Activated CD4-positive, alpha-beta T cell treated with anti-CD3 and anti-CD28 coated beads for 36 hours (primary cell): ENCODE measurements at regions of chr14 and their contacts with region 1.

Region 1: DNA sequence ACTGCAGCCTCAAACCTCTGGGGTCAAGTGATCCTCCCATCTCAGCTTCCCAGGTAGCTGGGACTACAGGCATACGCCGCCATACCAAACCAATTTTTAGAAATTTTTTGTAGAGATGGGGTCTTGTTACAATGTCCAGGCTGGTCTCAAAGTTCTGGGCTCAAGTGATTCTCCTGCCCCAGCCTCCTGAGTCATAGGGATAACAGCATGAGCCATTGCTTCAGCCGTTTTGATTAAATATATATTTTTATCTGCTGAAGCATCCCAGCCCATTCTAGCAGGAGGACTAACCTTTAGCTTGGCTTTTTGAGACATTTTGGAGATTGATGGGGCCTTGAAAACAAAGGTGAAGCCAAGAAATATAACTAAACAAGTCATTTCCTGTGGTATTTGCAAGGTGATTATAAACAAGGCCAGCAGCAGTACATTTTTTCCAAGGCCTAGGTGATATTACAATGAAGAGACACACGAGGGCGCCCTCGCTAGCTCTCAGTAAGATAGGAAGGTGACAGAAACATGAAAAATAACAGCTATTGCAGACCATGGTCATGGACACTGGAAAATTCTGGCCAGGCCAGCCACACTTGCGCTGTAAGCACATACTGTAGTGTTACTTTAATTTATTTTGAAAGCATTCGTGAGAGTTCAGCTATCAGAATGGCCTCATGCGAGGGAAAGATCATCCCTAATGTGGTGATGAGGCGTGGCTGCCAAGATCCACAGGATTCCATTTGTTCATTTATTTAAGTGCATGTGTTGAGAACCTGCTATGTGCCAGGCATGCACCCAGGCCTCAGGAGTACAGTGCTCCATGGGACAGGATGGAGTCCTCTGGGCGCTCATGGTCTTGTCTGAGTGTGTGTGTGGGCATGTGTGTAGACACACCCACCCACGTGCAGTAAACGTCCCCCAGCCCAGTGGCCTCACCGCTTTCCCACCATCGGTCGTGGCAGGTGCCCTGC is 63.5 kb downstream of the DGLUCY start:
- DNase-seq: peak; percentile 79
- ATAC-seq: peak; percentile 81
- H3K4me3 Mint-ChIP-seq: no peak overlapping the region
- H3K27ac Mint-ChIP-seq: peak overlapping the region; percentile 92
- H3K4me1 Mint-ChIP-seq: peaks cover 11% of the 10 kb centered on the region
- H3K27me3 Mint-ChIP-seq: no peaks in the 10 kb centered on the region

Region 2: GRCh38 chr14:90697577-90698206 is 479.7 kb before region 1 on chr14:
- CTCF ChIA-PET with region 1: no interaction called
- POLR2A ChIA-PET with region 1: no interaction called
- intact Hi-C with region 1: no loop called
- DNase-seq: peak; percentile 87
- ATAC-seq: peak; percentile 95
- H3K4me3 Mint-ChIP-seq: no peak overlapping the region
- H3K27ac Mint-ChIP-seq: no peak overlapping the region
- H3K4me1 Mint-ChIP-seq: no peaks in the 10 kb centered on the region
- H3K27me3 Mint-ChIP-seq: no peaks in the 10 kb centered on the region

Region 3: GRCh38 chr14:90903101-90903500 is 274.3 kb before region 1 on chr14:
- CTCF ChIA-PET with region 1: interaction called, 198 read pairs
- POLR2A ChIA-PET with region 1: no interaction called
- intact Hi-C with region 1: loop called (anchors 1 kb)
- DNase-seq: peak; percentile 77
- ATAC-seq: peak; percentile 86
- H3K4me3 Mint-ChIP-seq: no peak overlapping the region
- H3K27ac Mint-ChIP-seq: no peak overlapping the region
- H3K4me1 Mint-ChIP-seq: peaks cover 22% of the 10 kb centered on the region
- H3K27me3 Mint-ChIP-seq: no peaks in the 10 kb centered on the region

Region 4: DNA sequence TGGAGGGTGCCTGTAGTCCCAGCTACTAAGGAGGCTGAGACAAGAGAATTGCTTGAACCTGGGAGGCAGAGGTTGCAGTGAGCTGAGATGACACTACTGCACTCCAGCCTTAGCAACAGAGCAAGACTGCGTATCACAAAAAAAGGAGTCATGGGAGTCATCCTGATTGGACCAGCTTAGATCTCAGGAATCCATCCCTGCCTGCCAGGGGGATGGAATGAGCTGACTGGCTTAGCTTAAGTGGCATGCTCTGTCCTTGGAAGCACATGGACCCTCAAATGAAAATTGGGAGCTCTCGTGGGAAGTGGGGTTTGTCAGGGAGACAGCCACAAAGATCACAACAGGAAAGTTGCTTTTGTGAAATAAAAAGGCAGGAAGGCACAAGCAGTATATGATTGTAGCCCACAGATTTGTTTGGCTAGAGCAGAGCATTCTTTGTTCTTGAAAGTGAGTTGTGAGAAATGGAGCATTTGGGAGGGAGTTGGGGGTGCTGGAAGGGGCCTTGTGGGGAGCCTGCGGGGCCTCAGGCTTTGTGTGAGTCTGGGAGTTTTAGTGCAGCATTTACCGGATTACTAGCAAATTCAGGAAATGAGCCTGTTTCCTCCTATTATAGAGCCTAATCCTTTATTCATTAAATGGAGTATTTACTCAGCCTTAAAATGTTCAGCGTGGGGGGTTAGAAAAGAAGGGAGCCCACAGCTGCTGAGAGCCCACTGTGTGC is 32.8 kb before region 1 on chr14:
- CTCF ChIA-PET with region 1: interaction called, 17 read pairs
- POLR2A ChIA-PET with region 1: no interaction called
- intact Hi-C with region 1: no loop called
- DNase-seq: no peak
- ATAC-seq: no peak
- H3K4me3 Mint-ChIP-seq: no peak overlapping the region
- H3K27ac Mint-ChIP-seq: peak overlapping the region; percentile 2
- H3K4me1 Mint-ChIP-seq: peaks cover 34% of the 10 kb centered on the region
- H3K27me3 Mint-ChIP-seq: no peaks in the 10 kb centered on the region

Region 5: GRCh38 chr14:91216731-91217226 is 39.4 kb after region 1 on chr14:
- CTCF ChIA-PET with region 1: interaction called, 10 read pairs
- POLR2A ChIA-PET with region 1: no interaction called
- intact Hi-C with region 1: no loop called
- DNase-seq: no peak
- ATAC-seq: no peak
- H3K4me3 Mint-ChIP-seq: no peak overlapping the region
- H3K27ac Mint-ChIP-seq: no peak overlapping the region
- H3K4me1 Mint-ChIP-seq: peaks cover 6% of the 10 kb centered on the region
- H3K27me3 Mint-ChIP-seq: no peaks in the 10 kb centered on the region

Region 6: DNA sequence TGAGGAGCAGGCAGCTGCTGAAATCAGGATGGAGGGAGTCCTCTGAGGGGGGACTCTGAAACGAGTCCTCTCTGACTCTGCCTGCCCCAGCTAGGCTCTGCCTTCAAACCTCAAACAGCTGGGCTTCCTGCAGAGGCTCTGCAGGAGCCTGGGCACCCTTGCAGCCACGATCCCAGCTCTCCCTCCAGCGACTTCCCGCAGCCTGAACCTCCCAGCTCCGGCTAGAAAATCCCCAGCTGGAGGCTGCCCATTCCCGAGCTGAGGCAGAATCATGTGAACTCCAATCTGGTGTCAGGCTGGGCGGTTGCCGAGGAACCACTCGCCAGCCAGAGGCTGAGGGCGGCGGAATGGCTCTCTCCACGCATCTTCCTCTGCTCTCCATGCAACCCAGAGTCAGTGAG is 67.1 kb after region 1 on chr14 and contains the start of gene GPR68:
- CTCF ChIA-PET with region 1: interaction called, 7 read pairs
- POLR2A ChIA-PET with region 1: interaction called, 3 read pairs
- intact Hi-C with region 1: loop called in 1 of 2 experiments (anchors 5 kb)
- DNase-seq: no peak
- ATAC-seq: no peak
- H3K4me3 Mint-ChIP-seq: peak within 1 kb of the TSS; percentile 74
- H3K27ac Mint-ChIP-seq: peak within 1 kb of the TSS; percentile 89
- H3K4me1 Mint-ChIP-seq: peaks cover 95% of the 10 kb centered on the region
- H3K27me3 Mint-ChIP-seq: no peaks in the 10 kb centered on the region
- total RNA-seq, gene GPR68: 9.4 to 11.2 TPM

Region 7: GRCh38 chr14:91286530-91286937 is 109.2 kb after region 1 on chr14:
- CTCF ChIA-PET with region 1: interaction called, 253 read pairs
- POLR2A ChIA-PET with region 1: interaction called, 3 read pairs
- intact Hi-C with region 1: loop called (anchors 1 kb)
- DNase-seq: peak; percentile 89
- ATAC-seq: peak; percentile 84
- H3K4me3 Mint-ChIP-seq: no peak overlapping the region
- H3K27ac Mint-ChIP-seq: peak overlapping the region; percentile 78
- H3K4me1 Mint-ChIP-seq: peaks cover 13% of the 10 kb centered on the region
- H3K27me3 Mint-ChIP-seq: no peaks in the 10 kb centered on the region